PC-9 (cell line): ENCODE measurements at regions of chr15 and their contacts with region 1.

Region 1: GRCh38 chr15:89017370-89018066 is 70.7 kb upstream of the ABHD2 start:
- DNase-seq: peak; percentile 64 to 79
- H3K4me3 ChIP-seq: peak overlapping the region; percentile 42; the same call in 1 of the 2 replicates
- H3K27ac ChIP-seq: 0 out of 2 replicates have a peak overlapping the region, but pooled peaks have one; percentile 44
- H3K4me1 ChIP-seq: peaks cover 15% of the 10 kb centered on the region
- H3K27me3 ChIP-seq: no peaks in the 10 kb centered on the region
- CTCF ChIP-seq: peak; percentile 83

Region 2: DNA sequence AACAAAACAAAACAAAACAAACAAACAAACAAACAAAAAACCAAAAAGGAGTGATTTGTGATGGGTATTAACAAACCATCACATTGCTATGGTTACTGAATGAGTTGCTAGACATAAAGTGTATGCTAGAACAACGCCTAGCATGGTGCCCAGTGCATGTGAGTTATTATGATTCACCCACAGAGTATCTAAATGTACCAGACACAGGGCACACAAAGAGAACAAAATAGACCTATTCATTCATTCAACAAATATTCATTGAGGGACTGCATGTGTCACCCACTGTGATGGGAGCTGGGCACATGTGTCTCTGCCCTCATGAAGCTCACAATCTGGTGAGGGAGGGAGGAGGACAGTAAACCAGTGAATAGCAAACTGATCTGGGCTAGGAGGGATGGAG is 225.9 kb before region 1 on chr15:
- CTCF ChIA-PET with region 1: no interaction called
- POLR2A ChIA-PET with region 1: no interaction called
- intact Hi-C with region 1: no loop called
- DNase-seq: no peak
- H3K4me3 ChIP-seq: no peak overlapping the region
- H3K27ac ChIP-seq: no peak overlapping the region
- H3K4me1 ChIP-seq: no peaks in the 10 kb centered on the region
- H3K27me3 ChIP-seq: peaks cover 58% of the 10 kb centered on the region
- CTCF ChIP-seq: no peak

Region 3: DNA sequence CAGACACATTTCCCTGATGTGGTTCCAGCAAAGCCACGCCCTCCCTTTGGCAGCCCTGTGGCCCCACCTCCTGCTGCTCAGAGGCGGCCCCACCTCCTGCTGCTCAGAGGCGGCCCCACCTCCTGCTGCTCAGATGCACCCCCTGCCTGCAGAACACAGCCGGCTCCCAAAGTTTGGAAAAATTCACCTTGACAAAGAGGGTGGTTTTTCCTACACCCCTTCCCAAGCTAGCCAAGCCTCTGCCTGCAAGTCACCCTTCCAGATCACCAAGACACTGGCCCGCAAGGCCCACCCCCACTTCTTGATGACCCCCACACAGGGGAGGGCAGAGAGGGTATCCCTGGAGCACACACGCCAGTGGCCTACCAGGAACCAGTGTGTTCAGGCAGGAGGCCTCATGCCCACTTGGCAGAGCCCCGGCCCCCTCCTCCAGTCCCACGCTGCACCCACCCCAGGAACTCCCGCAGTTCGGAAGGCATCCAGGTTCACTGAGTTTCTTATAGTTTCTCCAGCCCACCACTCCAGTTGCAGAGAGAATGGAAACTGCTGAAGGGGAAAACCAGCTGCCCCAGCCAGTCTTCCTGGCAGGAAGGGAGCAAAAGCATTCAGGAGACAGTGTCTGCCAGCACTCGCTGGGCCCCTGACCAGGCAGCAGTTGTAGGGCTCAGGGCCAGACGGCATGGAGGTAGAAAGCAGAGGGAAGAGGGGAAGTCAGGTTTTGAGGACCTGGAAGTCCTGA is 119.9 kb before region 1 on chr15:
- CTCF ChIA-PET with region 1: interaction called, 5 read pairs
- POLR2A ChIA-PET with region 1: no interaction called
- intact Hi-C with region 1: loop called (anchors 2 kb)
- DNase-seq: peak; percentile 62 to 84
- H3K4me3 ChIP-seq: no peak overlapping the region
- H3K27ac ChIP-seq: no peak overlapping the region
- H3K4me1 ChIP-seq: 0 out of 2 replicates have a peak, but pooled peaks cover 3% of the 10 kb centered on the region
- H3K27me3 ChIP-seq: peaks cover 19% of the 10 kb centered on the region; the same call in 1 of the 2 replicates
- CTCF ChIP-seq: peak; percentile 57

Region 4: GRCh38 chr15:88904624-88905327 is 112.7 kb before region 1 on chr15:
- CTCF ChIA-PET with region 1: interaction called, 5 read pairs
- POLR2A ChIA-PET with region 1: no interaction called
- intact Hi-C with region 1: loop called (anchors 1 kb)
- DNase-seq: peak; percentile 36 to 75
- H3K4me3 ChIP-seq: no peak overlapping the region
- H3K27ac ChIP-seq: no peak overlapping the region
- H3K4me1 ChIP-seq: 0 out of 2 replicates have a peak, but pooled peaks cover 3% of the 10 kb centered on the region
- H3K27me3 ChIP-seq: no peaks in the 10 kb centered on the region
- CTCF ChIP-seq: peak; percentile 95